A673 (cell line): ENCODE measurements at regions of chr9 and their contacts with region 1.

Region 1: GRCh38 chr9:35553670-35554543 is 51.2 kb upstream of the TESK1 start:
- DNase-seq: peak; percentile 90
- H3K4me3 ChIP-seq: no peak overlapping the region
- H3K27ac ChIP-seq: no peak overlapping the region
- H3K4me1 ChIP-seq: peaks cover 3% of the 10 kb centered on the region
- H3K27me3 ChIP-seq: no peaks in the 10 kb centered on the region
- CTCF ChIP-seq: peak; percentile 91

Region 2: DNA sequence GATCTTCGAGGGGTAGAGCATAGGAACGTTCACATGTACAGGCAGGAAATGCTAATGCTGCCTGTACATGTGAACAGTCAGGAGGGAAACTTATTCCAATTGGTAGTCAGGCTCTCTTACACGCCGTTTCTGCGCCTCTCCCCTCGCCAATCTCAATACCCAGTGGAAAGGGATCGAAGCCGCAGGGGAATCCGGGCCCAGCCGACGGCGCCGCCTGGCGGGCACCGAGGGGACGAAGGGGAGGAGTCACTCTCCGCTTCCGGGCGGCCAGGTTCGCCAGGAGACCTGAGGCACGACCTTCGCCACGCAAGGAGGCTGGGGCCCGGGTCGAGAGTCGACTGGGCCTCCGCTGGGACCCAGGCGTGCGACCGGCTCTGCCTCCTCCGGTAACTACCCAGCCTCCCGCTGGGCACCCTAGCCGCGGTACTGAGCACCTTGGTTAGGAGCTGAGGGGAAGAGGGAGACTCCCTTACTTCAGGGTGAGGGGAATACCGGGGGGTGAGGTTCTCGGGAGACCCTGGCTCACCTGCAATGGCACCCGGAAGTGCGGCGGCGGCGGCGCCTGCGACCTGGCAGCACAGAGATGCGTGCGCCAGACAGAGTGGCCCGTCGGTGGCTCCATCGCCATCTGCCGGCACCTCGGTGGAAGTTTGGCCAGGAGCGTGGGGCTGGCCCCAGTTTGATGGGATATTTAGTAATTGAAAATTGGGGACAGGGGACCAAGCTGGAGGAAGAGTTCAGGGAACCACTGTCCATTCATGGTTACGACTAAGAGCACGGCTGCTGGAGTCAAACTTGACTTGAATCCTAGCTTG is 457.7 kb before region 1 on chr9 and contains the start of gene PIGO:
- CTCF ChIA-PET with region 1: no interaction called
- POLR2A ChIA-PET with region 1: no interaction called
- intact Hi-C with region 1: no loop called
- DNase-seq: peak; percentile 90
- H3K4me3 ChIP-seq: peak within 1 kb of the TSS; percentile 96
- H3K27ac ChIP-seq: peak within 1 kb of the TSS; percentile 99
- H3K4me1 ChIP-seq: peaks cover 7% of the 10 kb centered on the region
- H3K27me3 ChIP-seq: no peaks in the 10 kb centered on the region
- CTCF ChIP-seq: peak; percentile 77
- total RNA-seq, gene PIGO: 32.9 and 34.3 TPM in 2 replicates

Region 3: DNA sequence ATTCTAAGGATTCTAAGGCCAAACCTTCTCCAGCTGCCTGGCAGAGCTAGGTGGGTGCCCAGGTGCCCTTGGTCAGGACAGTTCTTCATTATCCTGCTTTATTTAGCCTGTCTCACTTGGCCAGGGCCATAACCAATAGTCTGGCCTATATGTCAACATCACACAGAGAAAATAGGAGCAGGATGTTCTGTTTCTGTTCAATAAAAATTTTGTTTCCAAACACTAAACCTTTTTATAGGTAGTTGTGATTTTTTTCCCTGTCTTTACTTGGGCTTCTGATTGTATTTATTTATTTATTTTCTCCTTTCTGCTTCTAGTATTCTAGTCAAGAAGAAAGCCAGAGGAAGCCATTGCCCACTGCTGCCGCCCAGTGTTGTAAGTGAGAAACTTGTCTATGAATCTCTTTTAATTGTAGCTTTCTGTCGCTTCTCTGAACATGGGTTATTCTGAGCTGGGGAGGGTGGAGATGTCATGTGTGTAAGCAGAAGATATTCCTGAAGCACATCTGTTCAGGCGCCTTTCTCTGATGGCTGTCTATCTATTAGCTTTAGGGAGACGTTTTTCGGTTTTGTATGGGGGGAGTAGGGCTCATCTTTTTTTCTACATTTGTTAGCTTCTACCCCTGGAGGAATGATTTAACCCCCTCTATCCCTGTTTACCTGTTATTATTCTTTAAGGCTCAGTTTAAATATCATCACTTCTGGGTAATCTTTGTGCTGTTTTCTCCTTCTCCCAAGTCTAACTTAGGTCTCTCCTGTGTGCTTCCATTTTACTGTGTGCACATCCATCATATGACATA is 295.0 kb before region 1 on chr9:
- CTCF ChIA-PET with region 1: interaction called, 10 read pairs
- POLR2A ChIA-PET with region 1: no interaction called
- intact Hi-C with region 1: no loop called
- DNase-seq: peak; percentile 87
- H3K4me3 ChIP-seq: no peak overlapping the region
- H3K27ac ChIP-seq: no peak overlapping the region
- H3K4me1 ChIP-seq: no peaks in the 10 kb centered on the region
- H3K27me3 ChIP-seq: no peaks in the 10 kb centered on the region
- CTCF ChIP-seq: peak; percentile 79

Region 4: GRCh38 chr9:35481347-35481975 is 72.4 kb before region 1 on chr9:
- CTCF ChIA-PET with region 1: interaction called, 10 read pairs
- POLR2A ChIA-PET with region 1: no interaction called
- intact Hi-C with region 1: loop called (anchors 2 kb)
- DNase-seq: peak; percentile 73
- H3K4me3 ChIP-seq: no peak overlapping the region
- H3K27ac ChIP-seq: no peak overlapping the region
- H3K4me1 ChIP-seq: peaks cover under 1% of the 10 kb centered on the region
- H3K27me3 ChIP-seq: no peaks in the 10 kb centered on the region
- CTCF ChIP-seq: peak; percentile 70

Region 5: DNA sequence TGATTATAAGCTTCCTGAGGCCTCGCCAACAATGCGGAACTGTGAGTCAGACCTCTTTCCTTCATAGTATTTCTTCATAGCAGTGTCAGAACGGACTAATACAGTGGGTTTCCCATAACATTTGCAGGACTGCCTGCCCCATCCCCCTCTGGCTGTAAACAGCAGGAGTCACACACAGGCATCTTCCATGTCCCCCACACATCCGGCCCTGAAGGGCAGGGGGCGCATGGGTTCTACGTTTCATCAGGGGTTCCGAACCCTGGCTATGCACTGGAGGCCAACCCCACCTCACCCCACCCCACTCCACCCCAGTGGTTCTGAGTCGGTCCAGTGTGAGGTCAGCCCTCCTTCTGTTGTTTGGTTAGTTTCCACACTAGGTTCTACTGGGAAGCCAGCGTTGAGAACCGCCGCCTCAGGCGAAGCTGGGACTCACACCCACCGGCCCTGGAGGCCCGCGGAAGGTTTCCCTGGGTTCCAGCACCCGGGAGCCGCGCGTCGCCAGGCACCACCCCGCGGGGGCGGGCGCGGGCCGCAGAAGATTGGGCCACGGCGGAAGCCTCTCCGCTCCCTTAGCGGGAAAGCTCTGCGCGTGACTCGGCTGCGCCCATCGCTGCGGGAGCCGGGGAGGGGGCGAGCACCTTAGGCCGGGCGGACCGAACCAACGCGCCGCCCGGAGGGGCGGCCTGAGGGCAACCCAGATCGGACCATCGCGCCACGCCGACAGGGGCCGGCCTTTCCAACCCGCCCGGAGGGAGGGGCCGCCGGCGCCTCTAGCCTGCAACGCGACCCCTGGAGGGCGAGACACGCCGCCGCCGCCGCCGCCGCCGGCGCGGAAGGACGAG is 64.4 kb before region 1 on chr9 and contains the start of gene RUSC2:
- CTCF ChIA-PET with region 1: interaction called, 17 read pairs
- POLR2A ChIA-PET with region 1: no interaction called
- intact Hi-C with region 1: loop called (anchors 1 kb)
- DNase-seq: peak; percentile 93
- H3K4me3 ChIP-seq: peak within 1 kb of the TSS; percentile 80
- H3K27ac ChIP-seq: peak within 1 kb of the TSS; percentile 87
- H3K4me1 ChIP-seq: peaks cover 27% of the 10 kb centered on the region
- H3K27me3 ChIP-seq: no peaks in the 10 kb centered on the region
- CTCF ChIP-seq: peak; percentile 48
- total RNA-seq, gene RUSC2: 19.4 and 22.2 TPM in 2 replicates